Heart left ventricle (tissue), 16 donors: ENCODE measurements at regions of chr6 and their contacts with region 1.

Region 1: DNA sequence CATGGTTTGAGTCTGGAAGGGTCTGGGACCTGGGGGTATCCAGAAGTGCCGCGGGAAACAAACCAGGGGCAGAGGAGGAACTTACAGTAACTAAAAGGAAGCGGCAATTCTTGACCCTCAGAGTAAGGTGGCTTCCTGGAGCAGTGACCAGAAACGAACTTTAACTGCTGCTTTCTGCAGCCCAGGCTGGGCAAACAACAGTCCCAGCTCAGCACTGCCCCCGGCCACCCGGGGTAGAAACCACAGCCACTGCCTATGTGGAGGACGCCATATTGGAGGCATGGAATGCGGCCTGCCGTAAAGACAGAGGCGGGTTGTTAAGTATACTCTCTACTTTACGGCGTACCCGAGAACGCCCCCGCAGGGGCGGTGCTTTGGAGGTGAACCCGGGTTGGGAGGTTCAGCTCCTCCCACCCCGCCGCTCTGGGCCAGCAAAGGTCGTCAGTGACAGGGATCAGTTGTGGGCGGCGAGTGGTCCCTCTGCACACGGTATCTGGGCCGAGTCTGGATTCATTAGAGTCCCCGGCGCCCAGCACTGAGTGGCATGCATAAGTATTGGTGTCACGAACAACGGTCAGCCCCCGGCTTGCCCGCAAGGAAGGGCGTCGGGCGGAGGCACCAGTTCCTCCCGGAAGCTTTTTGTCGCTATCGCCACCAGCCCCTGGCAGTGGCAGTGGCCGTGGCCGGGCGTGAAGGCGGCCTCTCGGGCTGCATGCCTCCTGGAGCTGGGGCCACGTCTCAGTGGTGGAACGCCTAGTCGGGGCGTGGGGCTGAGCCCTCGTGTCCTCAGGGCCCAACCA is at the start of gene PDSS2:
- DNase-seq: peak; percentile 98 to 100 (median 99)
- ATAC-seq: peak; percentile 98 to 99 (median 99)
- H3K4me3 ChIP-seq: peak within 1 kb of the TSS; percentile 64 to 96 (median 86)
- H3K27ac ChIP-seq: peak within 1 kb of the TSS; percentile 74 to 97 (median 94)
- H3K4me1 ChIP-seq: peaks cover 0 to 24% (median 10%) of the 10 kb centered on the region in 12 donors
- H3K27me3 ChIP-seq: no peaks in the 10 kb centered on the region
- CTCF ChIP-seq: peak; percentile 5 to 74 (median 42)
- POLR2A ChIP-seq: peak in 1 of 2 donors; percentile 93
- total RNA-seq, gene PDSS2: 13.2 to 24.4 (median 14.4) TPM

Region 2: GRCh38 chr6:107114213-107114905 is 345.1 kb before region 1 on chr6:
- intact Hi-C with region 1: loop called in 2 of 10 experiments (anchors 10 kb)
- DNase-seq: peak; percentile 87 to 95 (median 88)
- ATAC-seq: peak; percentile 79 to 97 (median 94)
- H3K4me3 ChIP-seq: peak overlapping the region; percentile 37 to 95 (median 68)
- H3K27ac ChIP-seq: peak overlapping the region in 11 of 12 donors; percentile 13 to 84 (median 59)
- H3K4me1 ChIP-seq: peaks cover 0 to 25% (median 16%) of the 10 kb centered on the region in 12 donors
- H3K27me3 ChIP-seq: peaks cover 0 to 6% (median 0%) of the 10 kb centered on the region in 9 donors
- CTCF ChIP-seq: peak; percentile 64 to 99 (median 95)
- POLR2A ChIP-seq: no peak

Region 3: DNA sequence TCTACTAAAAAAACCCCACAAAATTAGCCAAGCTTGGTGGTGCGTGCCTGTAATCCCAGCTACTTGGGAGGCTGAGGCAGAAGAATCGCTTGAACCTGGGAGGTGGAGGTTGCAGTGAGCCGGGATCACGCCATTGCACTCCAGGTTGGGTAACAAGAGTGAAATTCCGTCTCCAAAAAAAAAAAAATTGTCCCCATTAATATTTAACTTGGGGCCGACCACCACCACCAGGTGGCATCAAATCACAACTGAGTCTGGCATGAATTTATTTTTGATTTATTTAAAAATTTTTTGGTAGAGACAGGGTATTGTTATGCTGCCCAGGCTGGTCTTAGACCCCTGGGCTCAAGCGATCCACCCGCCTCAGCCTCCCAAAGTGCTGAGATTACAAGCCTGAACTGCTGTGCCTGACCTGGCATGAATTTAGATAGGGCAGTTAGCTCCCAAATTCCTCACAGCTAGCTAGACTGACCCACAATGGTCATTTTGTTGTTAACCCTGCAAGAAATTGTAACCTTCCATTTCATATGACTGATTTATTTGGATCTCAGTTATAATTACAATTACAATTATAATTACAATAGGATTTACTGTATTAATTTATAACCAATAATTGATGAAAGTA is 327.0 kb before region 1 on chr6:
- intact Hi-C with region 1: loop called in 1 of 10 experiments (anchors 10 kb)
- DNase-seq: peak in 1 of 5 donors; percentile 30
- ATAC-seq: no peak
- H3K4me3 ChIP-seq: no peak overlapping the region
- H3K27ac ChIP-seq: no peak overlapping the region
- H3K4me1 ChIP-seq: peaks cover 0 to 10% (median 0%) of the 10 kb centered on the region in 12 donors
- H3K27me3 ChIP-seq: no peaks in the 10 kb centered on the region
- CTCF ChIP-seq: peak in 10 of 12 donors; percentile 15 to 55 (median 45)
- POLR2A ChIP-seq: no peak

Region 4: DNA sequence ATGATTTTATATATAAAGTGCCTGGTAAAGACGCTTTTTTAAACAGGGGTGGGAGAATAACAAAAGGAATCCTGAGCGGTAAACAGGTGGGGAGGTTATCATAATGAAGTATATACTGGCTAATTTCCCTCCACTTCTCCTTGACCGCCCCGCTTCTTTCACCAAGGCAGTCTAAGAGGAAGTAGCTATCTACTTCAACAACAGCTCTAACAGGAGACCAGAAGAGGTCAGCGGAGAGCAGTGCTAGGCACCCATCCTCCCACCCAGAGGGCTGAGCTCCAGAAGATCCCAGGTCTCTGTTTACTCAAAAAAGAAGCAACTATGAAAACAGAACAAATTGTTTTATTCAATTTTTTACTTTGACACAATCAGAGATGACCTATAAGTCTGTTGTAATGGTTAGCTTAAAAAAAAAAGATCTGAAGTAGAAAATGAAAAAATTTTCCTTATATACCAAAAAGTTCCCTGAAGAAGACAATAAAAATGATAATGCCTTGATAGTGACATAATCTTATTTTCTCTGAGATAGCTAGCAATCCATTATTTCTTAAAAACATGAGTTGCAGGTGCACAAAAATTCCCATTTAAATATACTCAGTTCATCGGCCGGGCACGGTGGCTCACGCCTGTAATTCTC is 141.3 kb before region 1 on chr6:
- intact Hi-C with region 1: loop called in 2 of 10 experiments (anchors 2 to 10 kb)
- DNase-seq: peak in 4 of 5 donors; percentile 41 to 58 (median 49)
- ATAC-seq: peak; percentile 64 to 95 (median 92)
- H3K4me3 ChIP-seq: no peak overlapping the region
- H3K27ac ChIP-seq: no peak overlapping the region
- H3K4me1 ChIP-seq: peaks cover 0 to 6% (median 0%) of the 10 kb centered on the region in 12 donors
- H3K27me3 ChIP-seq: no peaks in the 10 kb centered on the region
- CTCF ChIP-seq: peak; percentile 39 to 77 (median 62)
- POLR2A ChIP-seq: no peak

Region 5: DNA sequence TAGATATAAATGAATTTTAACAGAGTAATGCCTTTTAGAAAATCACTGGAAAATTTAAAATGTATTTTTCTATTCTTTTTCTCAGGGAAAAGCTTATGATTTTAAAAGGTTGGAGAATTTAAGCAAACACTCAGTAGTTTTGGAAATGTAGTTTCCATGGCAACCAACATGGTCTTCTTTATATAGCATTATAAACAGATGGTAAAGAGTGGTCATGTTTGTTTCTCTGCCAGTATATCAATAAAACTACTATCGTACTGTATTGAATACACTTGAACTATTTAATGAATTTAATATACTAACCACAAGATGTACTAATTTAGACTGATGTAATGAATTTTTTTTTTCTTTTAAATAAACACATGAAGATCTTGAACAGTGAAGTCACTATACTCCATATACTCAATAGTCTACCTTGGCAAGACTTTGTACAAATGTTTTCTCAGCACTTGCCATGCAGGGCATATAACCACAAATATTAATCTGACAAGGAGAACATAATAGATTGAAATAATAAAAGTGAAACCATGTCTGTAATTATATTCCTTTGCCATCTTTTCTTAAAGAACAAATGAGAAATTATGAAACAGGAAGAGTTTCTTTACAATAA is 105.6 kb before region 1 on chr6:
- intact Hi-C with region 1: loop called in 1 of 10 experiments (anchors 10 kb)
- DNase-seq: no peak
- ATAC-seq: no peak
- H3K4me3 ChIP-seq: no peak overlapping the region
- H3K27ac ChIP-seq: no peak overlapping the region
- H3K4me1 ChIP-seq: peaks cover 0 to 15% (median 0%) of the 10 kb centered on the region in 12 donors
- H3K27me3 ChIP-seq: no peaks in the 10 kb centered on the region
- CTCF ChIP-seq: no peak
- POLR2A ChIP-seq: no peak

Region 6: GRCh38 chr6:107657755-107658461 is 198.4 kb after region 1 on chr6:
- intact Hi-C with region 1: loop called in 1 of 10 experiments (anchors 10 kb)
- DNase-seq: peak in 4 of 5 donors; percentile 39 to 60 (median 52)
- ATAC-seq: peak in 3 of 4 donors; percentile 47 to 58 (median 51)
- H3K4me3 ChIP-seq: peak overlapping the region in 1 of 12 donors; percentile 8
- H3K27ac ChIP-seq: peak overlapping the region in 3 of 12 donors; percentile 37 to 62 (median 38)
- H3K4me1 ChIP-seq: peaks cover 0 to 63% (median 24%) of the 10 kb centered on the region in 12 donors
- H3K27me3 ChIP-seq: no peaks in the 10 kb centered on the region
- CTCF ChIP-seq: peak in 3 of 12 donors; percentile 3 to 19 (median 15)
- POLR2A ChIP-seq: no peak

Region 7: DNA sequence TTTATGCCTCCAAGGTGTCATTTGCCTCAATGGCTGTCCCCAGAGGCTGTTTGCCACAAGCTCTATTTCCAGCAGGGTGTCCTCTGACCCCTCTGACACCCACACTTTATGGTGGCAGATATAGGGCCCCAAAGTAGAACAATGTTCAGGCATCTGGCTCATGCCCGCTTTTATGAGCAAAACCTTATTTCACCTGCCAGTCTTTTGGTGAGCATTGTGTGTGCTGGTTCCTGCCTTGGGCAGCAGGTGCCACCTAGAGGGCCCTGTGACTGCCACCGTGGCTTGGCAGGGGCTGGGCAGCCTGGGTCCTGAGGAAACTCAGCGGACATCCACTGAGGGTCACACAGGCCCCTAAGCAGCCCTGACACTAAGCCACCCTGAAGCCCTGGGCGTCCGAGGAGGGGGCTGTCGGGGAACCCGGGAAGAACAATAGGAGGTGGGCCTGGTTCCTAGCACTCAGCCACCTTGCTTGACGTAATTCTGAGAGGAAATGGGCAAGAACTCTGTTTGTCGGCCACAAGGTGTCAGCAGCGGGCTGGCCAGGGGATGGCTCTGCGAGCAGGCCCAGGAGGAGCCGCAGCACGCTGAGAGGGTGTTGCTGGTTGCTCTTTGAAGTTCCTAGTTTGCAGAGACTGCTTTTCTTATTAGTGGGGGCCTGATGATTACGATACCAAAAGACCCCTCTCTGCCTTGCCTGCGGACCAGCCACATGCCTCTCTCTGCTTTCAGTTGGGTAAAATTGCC is 215.7 kb after region 1 on chr6:
- intact Hi-C with region 1: loop called in 1 of 10 experiments (anchors 2 kb)
- DNase-seq: peak; percentile 85 to 92 (median 87)
- ATAC-seq: peak; percentile 88 to 95 (median 94)
- H3K4me3 ChIP-seq: peak overlapping the region in 9 of 12 donors; percentile 7 to 46 (median 26)
- H3K27ac ChIP-seq: peak overlapping the region in 3 of 12 donors; percentile 16 to 57 (median 55)
- H3K4me1 ChIP-seq: peaks cover 0 to 32% (median 16%) of the 10 kb centered on the region in 12 donors
- H3K27me3 ChIP-seq: no peaks in the 10 kb centered on the region
- CTCF ChIP-seq: peak; percentile 83 to 95 (median 92)
- POLR2A ChIP-seq: no peak

Region 8: DNA sequence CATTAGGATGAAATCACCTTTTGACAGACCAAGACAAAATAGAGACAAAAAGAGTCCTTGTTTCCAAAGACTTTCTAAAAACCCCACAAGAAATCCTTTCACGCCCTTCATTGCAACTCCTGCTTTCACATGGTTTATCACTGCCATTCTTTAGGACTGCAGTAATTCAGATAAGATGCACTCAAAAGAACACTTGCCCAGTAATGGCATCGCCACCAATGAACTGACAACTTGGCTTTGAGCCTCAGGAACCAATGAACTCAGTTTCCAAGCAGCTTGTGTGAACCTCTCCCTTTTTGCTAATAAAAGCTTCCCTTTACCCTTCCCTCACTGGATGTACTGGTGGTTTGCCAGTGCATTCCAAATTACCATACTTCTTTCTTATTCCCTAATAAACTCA is 593.2 kb after region 1 on chr6:
- intact Hi-C with region 1: no loop called
- DNase-seq: no peak
- ATAC-seq: no peak
- H3K4me3 ChIP-seq: no peak overlapping the region
- H3K27ac ChIP-seq: no peak overlapping the region
- H3K4me1 ChIP-seq: peaks cover 0 to 3% (median 0%) of the 10 kb centered on the region in 12 donors
- H3K27me3 ChIP-seq: no peaks in the 10 kb centered on the region
- CTCF ChIP-seq: no peak
- POLR2A ChIP-seq: no peak